ENCODE measurements at regions of chr2 and their contacts with region 1.

Region 1: DNA sequence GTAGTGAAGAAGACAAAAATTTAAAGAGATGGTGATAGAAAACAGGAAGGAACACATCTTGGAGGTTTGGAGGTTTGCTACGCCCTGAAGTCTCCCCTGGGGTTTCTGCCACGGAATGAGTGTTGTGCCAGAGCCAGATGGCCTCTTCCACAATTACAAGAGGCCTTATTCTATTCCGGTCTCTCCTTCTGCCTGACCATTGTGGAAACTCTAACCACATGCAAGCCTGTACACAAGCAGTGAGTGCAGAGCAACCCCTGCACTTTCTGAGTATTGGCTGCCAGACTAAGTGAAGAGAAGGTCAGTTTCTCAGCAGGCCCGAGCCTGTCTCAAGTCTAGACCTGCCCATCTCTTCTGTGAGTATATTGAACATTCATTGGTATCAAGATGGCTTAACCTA is 22.7 kb upstream of the MYO1B start:
- DNase-seq: no peak
- ATAC-seq: peak in 2 of 4 donors; percentile 27 to 36
- H3K4me3 ChIP-seq: no peak overlapping the region
- H3K27ac ChIP-seq: no peak overlapping the region
- H3K4me1 ChIP-seq: no peaks in the 10 kb centered on the region
- H3K27me3 ChIP-seq: no peaks in the 10 kb centered on the region
- CTCF ChIP-seq: no peak

Region 2: DNA sequence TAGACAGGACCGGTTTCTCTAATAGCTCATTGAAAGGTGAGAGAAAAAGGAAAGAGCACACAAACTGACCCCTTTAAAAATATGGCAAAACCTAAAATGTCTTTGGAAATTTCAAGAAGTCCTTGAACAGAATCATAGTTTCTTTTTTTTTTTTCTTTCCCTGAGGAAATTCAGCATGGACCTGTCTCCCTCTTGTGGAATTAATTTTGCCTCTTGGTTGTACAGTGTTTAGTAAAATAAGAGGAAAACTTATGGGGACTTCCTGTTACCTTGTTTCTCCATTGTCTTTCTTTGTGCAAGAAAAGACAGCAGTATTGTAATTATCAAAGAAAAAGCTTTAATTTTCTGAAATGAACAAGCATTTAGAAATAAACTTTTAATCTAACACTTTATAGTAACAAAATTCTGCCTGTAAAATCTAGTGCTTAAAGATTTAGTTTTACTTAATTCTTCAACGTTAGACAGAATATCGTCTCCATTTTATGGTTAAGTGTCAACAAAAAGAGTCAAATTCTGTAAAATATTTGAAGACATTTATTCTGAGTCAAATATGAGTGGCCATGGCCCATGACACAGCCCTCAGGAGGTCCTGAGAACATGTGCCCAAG is 279.2 kb after region 1 on chr2:
- intact Hi-C with region 1: loop called in 1 of 2 experiments (anchors 5 kb)
- DNase-seq: no peak
- ATAC-seq: no peak
- H3K4me3 ChIP-seq: no peak overlapping the region
- H3K27ac ChIP-seq: no peak overlapping the region
- H3K4me1 ChIP-seq: no peaks in the 10 kb centered on the region
- H3K27me3 ChIP-seq: no peaks in the 10 kb centered on the region
- CTCF ChIP-seq: peak; percentile 49